ENCODE measurements at regions of chr22 and their contacts with region 1.

Region 1: DNA sequence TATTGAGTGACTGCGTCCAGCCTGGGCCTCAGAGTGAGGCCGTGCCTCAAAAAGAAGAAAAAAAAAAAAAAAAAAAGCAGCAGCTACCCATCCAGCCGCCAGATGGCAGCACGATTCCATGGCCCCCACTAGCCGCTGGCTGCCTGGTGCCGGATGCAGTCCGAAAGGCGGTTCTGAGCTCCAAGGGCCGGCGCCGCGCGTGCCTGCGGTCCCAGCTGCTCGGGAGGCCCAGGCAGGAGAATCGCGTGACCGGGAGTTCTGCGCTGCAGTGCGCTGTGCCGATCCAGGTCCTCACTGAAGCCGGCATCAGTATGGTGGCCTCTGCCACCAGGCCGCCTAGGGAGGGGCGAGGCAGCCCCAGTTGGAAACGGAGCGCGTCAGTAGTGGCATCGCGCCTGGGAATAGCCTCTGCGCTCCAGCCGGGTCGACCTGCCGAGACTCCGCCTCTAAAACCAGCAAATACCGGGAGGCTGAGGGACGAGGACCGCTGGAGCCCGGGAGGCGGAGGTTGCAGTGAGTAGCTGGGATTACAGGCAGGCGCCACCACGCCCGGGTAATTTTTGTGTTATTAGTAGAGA is 19.3 kb downstream of the SCARF2 start:
- DNase-seq: peak; percentile 83
- ATAC-seq: peak; percentile 85
- H3K4me3 Mint-ChIP-seq: peak overlapping the region; percentile 59
- H3K27ac Mint-ChIP-seq: no peak overlapping the region
- H3K4me1 Mint-ChIP-seq: peaks cover under 1% of the 10 kb centered on the region; the same call in 1 of the 2 replicates
- H3K27me3 Mint-ChIP-seq: no peaks in the 10 kb centered on the region; the same call in 1 of the 2 replicates
- CTCF ChIP-seq: peak; percentile 80

Region 2: GRCh38 chr22:19986410-19987341 is 431.6 kb before region 1 on chr22:
- CTCF ChIA-PET with region 1: no interaction called
- POLR2A ChIA-PET with region 1: no interaction called
- DNase-seq: peak; percentile 83
- ATAC-seq: peak; percentile 82
- H3K4me3 Mint-ChIP-seq: peak overlapping the region; percentile 70
- H3K27ac Mint-ChIP-seq: no peak overlapping the region
- H3K4me1 Mint-ChIP-seq: peaks cover 5% of the 10 kb centered on the region; the same call in 1 of the 2 replicates
- H3K27me3 Mint-ChIP-seq: no peaks in the 10 kb centered on the region
- CTCF ChIP-seq: no peak

Region 3: GRCh38 chr22:20221421-20222340 is 196.6 kb before region 1 on chr22:
- CTCF ChIA-PET with region 1: no interaction called
- POLR2A ChIA-PET with region 1: no interaction called
- DNase-seq: no peak
- ATAC-seq: no peak
- H3K4me3 Mint-ChIP-seq: no peak overlapping the region
- H3K27ac Mint-ChIP-seq: no peak overlapping the region; the same call in 1 of the 2 replicates
- H3K4me1 Mint-ChIP-seq: no peaks in the 10 kb centered on the region
- H3K27me3 Mint-ChIP-seq: peaks cover 3% of the 10 kb centered on the region; the same call in 1 of the 2 replicates
- CTCF ChIP-seq: no peak

Region 4: GRCh38 chr22:20298803-20299735 is 119.2 kb before region 1 on chr22:
- CTCF ChIA-PET with region 1: interaction called, 11 read pairs
- POLR2A ChIA-PET with region 1: no interaction called
- DNase-seq: peak; percentile 96
- ATAC-seq: peak; percentile 85
- H3K4me3 Mint-ChIP-seq: peak overlapping the region; percentile 65
- H3K27ac Mint-ChIP-seq: no peak overlapping the region
- H3K4me1 Mint-ChIP-seq: peaks cover 6% of the 10 kb centered on the region; the same call in 1 of the 2 replicates
- H3K27me3 Mint-ChIP-seq: peaks cover 53% of the 10 kb centered on the region
- CTCF ChIP-seq: no peak

Region 5: DNA sequence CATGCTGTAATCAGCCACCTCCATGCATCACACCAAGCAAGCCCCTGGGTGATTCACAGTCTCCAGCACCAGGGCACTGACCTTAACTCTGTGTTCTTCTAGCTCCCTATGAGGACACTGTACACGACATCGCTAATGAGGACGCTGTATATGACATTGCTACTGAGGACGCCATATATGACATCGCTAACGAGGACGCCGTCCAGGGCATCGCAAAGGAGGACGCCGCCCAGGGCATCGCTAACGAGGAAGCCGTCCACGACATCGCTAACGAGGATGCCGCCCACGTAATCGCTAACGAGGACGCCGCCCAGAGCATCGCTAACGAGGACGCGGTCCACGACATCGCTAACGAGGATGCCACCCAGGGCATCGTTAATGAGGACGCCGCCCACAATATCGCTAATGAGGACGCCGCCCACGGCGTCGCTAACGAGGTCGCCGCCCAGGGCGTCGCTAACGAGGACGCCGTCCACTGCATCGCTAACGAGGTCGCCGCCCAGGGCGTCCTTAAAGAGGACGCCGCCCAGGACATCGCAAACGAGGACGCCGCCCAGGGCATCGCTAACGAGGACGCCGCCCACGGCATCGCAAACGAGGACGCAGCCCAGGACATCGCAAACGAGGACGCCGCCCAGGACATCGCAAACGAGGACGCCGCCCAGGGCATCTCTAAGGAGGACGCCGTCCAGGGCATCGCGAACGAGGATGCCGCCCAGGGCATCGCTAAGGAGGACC is 63.9 kb before region 1 on chr22:
- CTCF ChIA-PET with region 1: no interaction called
- POLR2A ChIA-PET with region 1: no interaction called
- DNase-seq: no peak
- ATAC-seq: no peak
- H3K4me3 Mint-ChIP-seq: no peak overlapping the region
- H3K27ac Mint-ChIP-seq: no peak overlapping the region; the same call in 1 of the 2 replicates
- H3K4me1 Mint-ChIP-seq: no peaks in the 10 kb centered on the region
- H3K27me3 Mint-ChIP-seq: no peaks in the 10 kb centered on the region
- CTCF ChIP-seq: no peak

Region 6: GRCh38 chr22:20393909-20394691 is 24.2 kb before region 1 on chr22 and contains the start of gene ZNF74:
- CTCF ChIA-PET with region 1: interaction called, 30 read pairs
- POLR2A ChIA-PET with region 1: no interaction called
- DNase-seq: peak; percentile 91
- ATAC-seq: peak; percentile 95
- H3K4me3 Mint-ChIP-seq: peak within 1 kb of the TSS; percentile 87
- H3K27ac Mint-ChIP-seq: peak within 1 kb of the TSS; percentile 94
- H3K4me1 Mint-ChIP-seq: peaks cover 38% of the 10 kb centered on the region
- H3K27me3 Mint-ChIP-seq: no peaks in the 10 kb centered on the region; the same call in none of the 2 replicates
- CTCF ChIP-seq: no peak
- total RNA-seq, gene ZNF74: 56.5 to 62.8 TPM (median 61.7 TPM) in 3 replicates

Region 7: DNA sequence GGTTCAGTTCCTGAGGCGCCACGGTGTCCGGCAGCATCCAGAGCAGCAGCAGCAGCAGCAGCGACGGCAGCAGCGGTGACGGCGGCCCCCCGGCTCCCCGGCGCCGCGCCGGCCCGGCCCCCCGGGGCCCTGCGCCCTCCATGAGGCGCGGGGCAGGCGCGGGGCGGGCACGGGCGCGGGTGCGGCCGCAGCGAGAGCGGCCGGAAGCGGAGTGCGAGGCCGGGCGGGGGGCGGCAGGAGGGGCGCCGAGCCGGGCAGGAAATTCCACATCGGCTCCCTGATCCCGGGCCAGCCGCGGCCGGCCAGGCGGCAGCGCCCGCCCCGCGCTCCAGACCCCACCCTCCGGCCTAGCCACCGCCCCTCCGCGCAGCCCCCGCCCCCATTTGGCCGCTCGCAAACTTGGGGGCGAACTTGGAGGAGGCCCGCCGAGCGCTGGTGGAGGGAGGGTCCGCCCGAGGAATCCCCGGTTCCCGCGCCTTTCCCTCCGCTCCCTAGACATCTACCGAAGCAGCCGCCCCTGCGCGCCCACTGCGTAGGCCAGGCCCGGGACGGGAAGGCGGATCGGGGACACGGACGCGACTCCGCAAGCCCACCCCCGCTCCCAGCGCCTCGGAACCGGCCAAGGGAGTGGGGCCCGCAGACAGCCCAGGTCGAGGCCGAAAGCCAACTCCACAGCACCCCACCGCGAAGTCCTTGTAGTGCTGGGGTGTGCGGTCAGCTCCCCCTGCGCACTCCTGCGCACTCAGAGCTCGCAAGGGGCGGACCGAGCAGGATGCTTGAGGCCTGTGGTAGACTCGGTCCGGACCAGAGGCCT is 19.5 kb after region 1 on chr22 and contains the start of gene SCARF2:
- CTCF ChIA-PET with region 1: interaction called, 31 read pairs
- POLR2A ChIA-PET with region 1: interaction called, 4 read pairs
- DNase-seq: peak; percentile 74
- ATAC-seq: peak; percentile 74
- H3K4me3 Mint-ChIP-seq: peak within 1 kb of the TSS; percentile 92
- H3K27ac Mint-ChIP-seq: no peak within 1 kb of the TSS
- H3K4me1 Mint-ChIP-seq: peaks cover 23% of the 10 kb centered on the region
- H3K27me3 Mint-ChIP-seq: peaks cover 54% of the 10 kb centered on the region
- CTCF ChIP-seq: no peak
- total RNA-seq, gene SCARF2: 17.4 to 26.3 TPM (median 17.5 TPM) in 3 replicates

Region 8: DNA sequence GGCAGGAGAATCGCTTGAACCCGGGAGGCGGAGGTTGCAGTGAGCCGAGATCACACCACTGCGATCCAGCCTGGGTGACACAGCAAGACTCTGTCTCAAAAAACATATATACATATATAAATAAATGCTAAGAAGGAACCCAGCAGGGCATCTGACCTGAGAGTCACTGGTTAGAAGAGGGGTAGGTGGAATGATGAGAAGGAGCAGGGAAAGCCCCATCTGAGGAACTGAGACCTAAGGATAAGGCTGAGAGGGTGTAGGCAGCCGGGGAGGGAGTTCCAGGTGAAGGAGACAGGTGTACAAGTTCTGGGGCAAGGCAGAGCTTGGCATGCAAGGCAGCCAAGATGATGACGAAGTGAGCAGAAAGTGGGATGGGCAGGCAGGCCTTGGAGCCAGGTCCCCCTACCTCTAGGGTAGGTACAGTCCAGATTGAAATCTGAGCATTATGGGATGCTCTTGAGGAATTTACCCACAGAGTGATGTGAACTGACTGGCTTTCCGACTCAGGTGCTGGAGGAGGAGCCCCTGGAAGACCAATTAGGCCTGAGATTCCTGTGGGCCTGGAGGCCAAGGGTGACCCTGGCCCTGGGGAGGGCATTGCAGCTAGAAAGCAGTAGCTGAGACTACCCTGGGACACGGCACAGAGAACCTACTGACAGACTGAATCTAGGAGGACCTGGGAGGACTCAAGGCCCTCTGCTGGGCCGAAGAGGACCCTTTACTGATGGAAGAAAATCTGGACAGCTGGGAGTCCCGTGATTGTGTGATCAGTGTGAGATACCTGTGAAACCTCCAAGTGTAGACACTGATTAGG is 54.5 kb after region 1 on chr22:
- CTCF ChIA-PET with region 1: interaction called, 12 read pairs
- POLR2A ChIA-PET with region 1: no interaction called
- DNase-seq: no peak
- ATAC-seq: no peak; the same call in 1 of the 2 replicates
- H3K4me3 Mint-ChIP-seq: no peak overlapping the region
- H3K27ac Mint-ChIP-seq: no peak overlapping the region
- H3K4me1 Mint-ChIP-seq: no peaks in the 10 kb centered on the region
- H3K27me3 Mint-ChIP-seq: no peaks in the 10 kb centered on the region
- CTCF ChIP-seq: no peak

Region 9: GRCh38 chr22:20591660-20592310 is 173.5 kb after region 1 on chr22:
- CTCF ChIA-PET with region 1: interaction called, 10 read pairs
- POLR2A ChIA-PET with region 1: no interaction called
- DNase-seq: peak; percentile 74
- ATAC-seq: peak; percentile 82
- H3K4me3 Mint-ChIP-seq: no peak overlapping the region
- H3K27ac Mint-ChIP-seq: no peak overlapping the region
- H3K4me1 Mint-ChIP-seq: peaks cover 5% of the 10 kb centered on the region; the same call in 1 of the 2 replicates
- H3K27me3 Mint-ChIP-seq: no peaks in the 10 kb centered on the region
- CTCF ChIP-seq: no peak

Measured in WTC11 (cell line).